Heart right ventricle (tissue), 16 donors: ENCODE measurements at regions of chr15 and their contacts with region 1.

Region 1: DNA sequence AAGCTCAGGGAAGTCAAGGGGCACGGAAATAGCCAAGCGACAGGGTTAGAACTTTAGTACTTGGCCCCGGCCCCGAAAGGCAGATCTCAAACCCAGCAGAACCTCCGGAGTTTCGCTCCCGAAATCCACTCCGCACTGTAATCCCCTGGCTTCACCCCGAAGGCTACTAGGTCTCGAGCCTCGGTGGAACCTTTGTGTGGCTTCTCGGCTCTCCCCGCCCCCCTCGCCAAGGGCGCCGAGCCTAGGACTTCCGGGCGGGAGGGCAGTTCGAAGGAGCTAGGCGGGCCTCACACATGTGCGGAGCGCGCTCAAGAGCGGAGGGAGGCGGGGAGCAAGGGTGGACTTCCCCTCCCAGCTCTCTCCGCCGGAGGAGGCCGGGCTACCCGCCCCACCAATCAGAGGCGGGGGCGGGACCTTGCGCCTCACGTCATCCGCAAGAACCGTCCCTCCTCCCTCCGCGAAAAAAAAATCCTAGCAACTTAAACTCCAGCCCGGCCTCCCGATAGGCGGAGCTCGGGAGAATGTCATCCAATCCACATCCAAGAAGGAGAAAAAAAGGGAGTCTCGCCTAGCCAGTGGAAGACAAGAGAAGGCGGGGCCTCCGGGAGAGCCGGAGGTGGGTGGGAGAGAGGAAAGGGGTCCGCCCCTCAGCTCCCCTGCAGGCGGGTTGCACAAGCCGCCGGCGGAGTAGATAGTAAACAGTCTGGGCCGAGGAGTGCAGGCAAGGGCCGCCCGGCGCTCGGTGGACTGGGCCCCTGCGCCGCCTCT is 2.4 kb upstream of the SIN3A start:
- DNase-seq: peak; percentile 97 to 98
- ATAC-seq: peak; percentile 61 to 79 (median 73)
- H3K4me3 ChIP-seq: peak overlapping the region; percentile 61 to 99 (median 94)
- H3K27ac ChIP-seq: peak overlapping the region; percentile 90 to 99 (median 98)
- H3K4me1 ChIP-seq: peaks cover 0 to 41% (median 31%) of the 10 kb centered on the region in 9 donors
- H3K27me3 ChIP-seq: no peaks in the 10 kb centered on the region
- CTCF ChIP-seq: peak in 1 of 9 donors; percentile 29

Region 2: DNA sequence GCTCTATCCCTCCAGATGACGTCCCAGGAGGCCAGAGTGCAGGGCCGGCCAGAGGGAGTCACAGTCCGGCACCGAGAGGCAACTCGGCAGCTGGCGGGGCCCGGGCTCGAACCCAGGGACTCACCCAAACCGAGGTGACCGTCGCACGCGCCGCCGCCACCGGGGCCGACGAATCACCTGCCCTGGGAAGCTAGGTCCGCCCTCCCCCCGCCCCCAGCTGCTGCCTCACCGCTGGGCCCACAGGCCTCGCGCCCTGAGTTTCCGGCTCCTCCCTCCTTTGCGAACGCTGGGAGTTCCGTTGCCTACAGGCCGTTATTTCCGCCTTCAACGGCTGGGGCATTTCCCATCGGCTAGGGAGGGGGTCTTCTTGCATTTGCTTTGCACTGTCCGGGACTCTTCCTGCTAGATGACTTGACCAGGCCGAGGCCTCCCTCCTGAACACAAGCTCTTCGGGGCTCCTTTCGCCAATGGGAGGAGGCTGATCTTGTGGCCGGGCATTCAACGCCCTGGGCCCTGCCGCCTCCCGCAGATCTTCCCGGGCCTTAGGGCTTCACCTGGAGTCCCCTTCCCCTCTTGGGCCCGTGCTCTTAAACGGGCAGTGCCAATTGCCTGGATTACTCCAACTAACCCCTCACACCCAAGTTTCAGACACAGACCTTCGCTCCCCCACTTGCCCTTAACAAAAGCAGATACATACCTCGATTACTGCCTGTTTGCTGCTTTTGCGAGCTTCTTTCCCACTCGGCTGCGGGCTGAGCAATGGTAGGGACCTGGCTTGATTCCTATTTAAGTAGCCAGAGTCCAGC is 171.9 kb after region 1 on chr15 and contains the start of gene SNUPN:
- intact Hi-C with region 1: loop called in 4 of 10 experiments (anchors 5 to 10 kb)
- DNase-seq: peak; percentile 95 to 96
- ATAC-seq: peak; percentile 93 to 96 (median 95)
- H3K4me3 ChIP-seq: peak within 1 kb of the TSS; percentile 75 to 98 (median 88)
- H3K27ac ChIP-seq: peak within 1 kb of the TSS; percentile 76 to 100 (median 98)
- H3K4me1 ChIP-seq: peaks cover 0 to 30% (median 18%) of the 10 kb centered on the region in 9 donors
- H3K27me3 ChIP-seq: no peaks in the 10 kb centered on the region
- CTCF ChIP-seq: no peak
- total RNA-seq, gene SNUPN: 12.9 to 18.2 (median 16.1) TPM

Region 3: DNA sequence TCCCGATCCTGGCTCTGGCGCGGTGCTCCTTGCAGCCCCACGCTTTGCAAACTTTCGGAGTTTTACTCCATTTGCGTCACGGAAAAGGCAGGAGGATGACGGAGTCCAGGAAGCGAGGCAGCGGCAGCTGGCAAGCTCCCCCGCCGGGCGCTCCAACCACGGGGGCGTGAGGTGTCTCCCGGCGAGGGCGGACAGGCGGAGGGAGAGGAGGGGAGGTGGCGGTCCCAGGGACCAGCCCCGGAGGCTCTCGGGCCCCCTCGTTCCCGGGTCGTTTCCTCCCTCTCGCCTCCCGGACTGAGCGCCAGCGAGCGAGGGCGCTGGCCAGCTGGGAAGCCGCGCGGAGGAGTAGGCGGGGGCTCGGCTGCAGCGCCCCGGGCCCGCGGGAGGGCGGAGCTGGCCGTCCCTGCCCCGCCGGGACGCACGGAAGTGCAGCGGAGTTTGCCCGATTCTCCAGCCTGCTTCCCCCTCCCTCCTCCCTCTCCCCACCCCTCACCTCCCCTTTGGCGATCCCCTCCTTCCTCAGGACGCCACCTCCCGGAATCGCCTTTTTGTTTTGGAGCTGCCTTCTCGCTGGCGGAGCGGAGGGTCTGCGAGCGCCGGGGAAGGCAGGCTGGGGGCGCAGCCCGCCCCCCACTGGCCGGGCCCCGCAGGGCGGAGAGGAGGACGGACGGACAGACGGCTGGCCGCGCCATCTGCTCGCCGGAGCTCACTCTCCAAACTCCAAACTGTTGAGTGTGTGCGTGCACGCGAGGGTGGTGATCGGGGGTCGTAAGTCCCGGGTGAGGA is 193.7 kb after region 1 on chr15 and contains the start of gene SNX33:
- intact Hi-C with region 1: loop called in 1 of 10 experiments (anchors 2 kb)
- DNase-seq: peak; percentile 83 to 87
- ATAC-seq: peak; percentile 79 to 88 (median 82)
- H3K4me3 ChIP-seq: peak within 1 kb of the TSS; percentile 67 to 87 (median 77)
- H3K27ac ChIP-seq: peak within 1 kb of the TSS; percentile 90 to 98 (median 96)
- H3K4me1 ChIP-seq: peaks cover 33 to 59% (median 51%) of the 10 kb centered on the region in 9 donors
- H3K27me3 ChIP-seq: peaks cover 0 to 5% (median 0%) of the 10 kb centered on the region in 7 donors
- CTCF ChIP-seq: peak; percentile 26 to 69 (median 52)
- total RNA-seq, gene SNX33: 7.6 to 14.8 (median 9.8) TPM